Heart left ventricle (tissue), 16 donors: ENCODE measurements at regions of chr1 and their contacts with region 1.

Region 1: GRCh38 chr1:47772960-47773682 is 224.1 kb downstream of the TRABD2B start:
- DNase-seq: peak in 1 of 5 donors; percentile 38
- ATAC-seq: peak in 3 of 4 donors; percentile 34 to 59 (median 56)
- H3K4me3 ChIP-seq: no peak overlapping the region
- H3K27ac ChIP-seq: no peak overlapping the region
- H3K4me1 ChIP-seq: peaks cover 0 to 8% (median 0%) of the 10 kb centered on the region in 12 donors
- H3K27me3 ChIP-seq: no peaks in the 10 kb centered on the region
- CTCF ChIP-seq: no peak
- POLR2A ChIP-seq: no peak

Region 2: DNA sequence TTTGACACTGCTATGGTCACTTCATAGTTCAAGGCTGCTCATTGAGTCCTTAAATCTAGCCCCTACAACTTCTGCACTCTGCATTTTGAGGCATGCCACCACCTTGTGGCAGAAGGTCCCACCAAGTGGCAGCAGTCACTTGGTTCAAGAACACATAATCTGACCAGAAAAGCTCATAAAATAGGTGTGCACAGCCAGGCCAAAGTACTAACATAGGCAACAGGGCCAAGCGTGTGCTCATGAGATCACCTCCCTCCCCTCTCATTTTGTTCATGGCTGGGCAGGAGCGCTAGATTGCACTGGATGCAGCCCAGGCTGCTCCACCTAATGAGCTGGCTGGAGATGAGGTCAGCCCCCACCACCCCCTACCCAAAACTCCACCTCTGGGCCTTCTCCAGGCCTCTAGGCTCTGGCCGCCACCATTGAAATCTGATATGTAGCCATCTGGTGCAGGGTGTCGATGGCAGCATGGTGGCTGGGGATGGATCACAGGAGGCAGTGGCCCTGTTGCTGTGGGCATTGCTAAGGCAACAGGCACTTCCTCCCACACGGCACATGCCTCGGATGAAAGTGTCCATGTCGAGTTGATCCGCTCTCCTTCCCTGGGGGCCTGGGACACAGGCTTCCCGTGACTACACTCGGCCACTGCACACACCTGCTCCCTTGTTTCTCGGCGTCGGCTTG is 30.8 kb after region 1 on chr1:
- intact Hi-C with region 1: loop called in 1 of 10 experiments (anchors 1 kb)
- DNase-seq: peak in 1 of 5 donors; percentile 22
- ATAC-seq: peak in 2 of 4 donors; percentile 28 to 30
- H3K4me3 ChIP-seq: no peak overlapping the region
- H3K27ac ChIP-seq: no peak overlapping the region
- H3K4me1 ChIP-seq: peaks cover 0 to 9% (median 0%) of the 10 kb centered on the region in 12 donors
- H3K27me3 ChIP-seq: no peaks in the 10 kb centered on the region
- CTCF ChIP-seq: no peak
- POLR2A ChIP-seq: no peak